PC-3 (cell line): ENCODE measurements at regions of chr1 and their contacts with region 1.

Region 1: DNA sequence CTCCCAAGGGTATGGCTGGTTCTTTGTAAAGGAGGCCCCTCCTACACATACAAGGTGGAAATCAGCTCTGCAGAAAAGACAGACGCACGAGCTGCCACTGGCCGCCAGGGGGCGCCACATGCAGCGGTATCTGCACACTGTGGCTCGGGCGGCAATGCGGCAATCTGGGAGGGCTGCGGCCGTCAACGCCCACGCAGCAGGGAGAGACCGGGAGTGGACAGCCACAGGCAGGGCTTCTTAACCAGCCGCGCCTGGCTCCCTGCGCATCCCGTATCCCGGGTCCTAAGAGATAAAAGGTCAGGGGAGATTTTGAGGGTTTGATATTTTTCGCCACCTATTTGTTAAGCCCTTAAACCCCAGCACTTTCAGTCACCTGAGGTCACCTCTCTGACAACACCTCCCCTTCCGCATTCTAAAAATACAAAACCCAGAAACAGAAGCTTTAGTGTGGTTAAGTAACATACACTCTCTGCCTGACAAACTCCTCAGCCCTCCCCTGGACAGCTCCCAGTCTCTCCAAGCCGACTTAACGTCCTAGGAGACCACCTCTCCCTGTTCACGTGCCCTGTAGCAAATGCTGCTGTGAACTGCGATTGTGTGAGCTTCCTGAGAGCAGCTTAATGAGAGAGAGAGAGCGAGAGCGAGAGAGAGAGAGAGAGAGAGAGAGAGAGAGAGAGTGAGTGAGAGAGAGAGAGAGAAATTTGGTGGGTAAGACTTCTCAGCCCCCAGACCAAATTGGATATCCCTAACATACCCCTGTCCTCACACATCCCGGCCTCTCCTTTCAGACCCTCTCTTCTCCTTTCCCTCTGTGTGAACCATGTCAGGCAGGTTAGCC is 13.5 kb upstream of the KCNA2 start:
- DNase-seq: peak; percentile 79
- ATAC-seq: peak; percentile 78
- H3K4me3 ChIP-seq: no peak overlapping the region
- H3K27ac ChIP-seq: no peak overlapping the region
- H3K4me1 ChIP-seq: peaks cover 6% of the 10 kb centered on the region; the same call in 1 of the 2 replicates
- H3K27me3 ChIP-seq: peaks cover 45% of the 10 kb centered on the region
- CTCF ChIP-seq: peak; percentile 97

Region 2: DNA sequence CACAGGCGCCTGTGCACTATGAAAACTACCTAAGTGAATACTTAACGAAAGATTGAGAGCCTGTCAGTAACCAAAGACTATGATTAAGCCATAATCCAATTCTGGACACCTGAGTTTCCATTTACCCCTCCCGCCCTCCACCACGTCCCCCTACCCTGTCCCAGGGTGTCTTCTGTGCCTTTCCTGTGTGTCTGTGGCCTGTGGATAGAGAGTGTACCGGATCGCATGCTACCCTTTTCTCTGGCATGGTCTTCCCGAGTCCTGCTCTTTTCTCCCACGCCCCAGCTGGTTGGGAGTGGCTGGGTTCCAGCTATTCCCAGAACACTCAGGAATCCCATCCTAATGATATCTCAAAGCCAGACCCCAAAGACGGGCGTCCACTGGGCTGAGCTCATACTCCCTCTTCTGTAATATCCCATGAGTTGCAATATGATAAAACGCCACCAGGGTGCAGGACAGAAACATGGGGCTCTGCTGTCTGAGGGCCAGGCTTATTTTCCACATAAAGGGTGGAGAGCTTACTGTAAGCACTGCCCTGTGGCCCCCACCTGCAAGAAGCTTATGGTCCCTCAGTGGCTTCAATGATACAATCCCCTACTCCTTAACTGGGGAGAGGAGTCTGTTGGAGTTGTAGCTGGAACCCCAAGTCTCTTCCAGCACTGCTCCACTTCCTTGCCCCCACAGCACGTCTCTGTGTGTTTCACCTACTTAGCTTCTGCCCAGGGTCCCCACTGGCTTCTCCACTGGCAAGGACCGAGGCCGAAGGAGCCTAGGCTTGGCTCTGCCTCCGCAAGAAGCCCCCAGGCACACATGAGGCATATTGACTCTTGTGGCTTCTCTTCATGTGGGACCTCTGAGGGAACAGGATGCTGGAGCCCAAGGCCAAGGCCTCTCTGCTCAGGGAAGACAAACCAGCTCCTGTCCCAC is 531.6 kb before region 1 on chr1:
- CTCF ChIA-PET with region 1: no interaction called
- POLR2A ChIA-PET with region 1: no interaction called
- intact Hi-C with region 1: loop called (anchors 5 kb)
- DNase-seq: peak; percentile 76
- ATAC-seq: peak; percentile 96
- H3K4me3 ChIP-seq: no peak overlapping the region
- H3K27ac ChIP-seq: no peak overlapping the region
- H3K4me1 ChIP-seq: no peaks in the 10 kb centered on the region
- H3K27me3 ChIP-seq: 0 out of 2 replicates have a peak, but pooled peaks cover 5% of the 10 kb centered on the region
- CTCF ChIP-seq: peak; percentile 72

Region 3: DNA sequence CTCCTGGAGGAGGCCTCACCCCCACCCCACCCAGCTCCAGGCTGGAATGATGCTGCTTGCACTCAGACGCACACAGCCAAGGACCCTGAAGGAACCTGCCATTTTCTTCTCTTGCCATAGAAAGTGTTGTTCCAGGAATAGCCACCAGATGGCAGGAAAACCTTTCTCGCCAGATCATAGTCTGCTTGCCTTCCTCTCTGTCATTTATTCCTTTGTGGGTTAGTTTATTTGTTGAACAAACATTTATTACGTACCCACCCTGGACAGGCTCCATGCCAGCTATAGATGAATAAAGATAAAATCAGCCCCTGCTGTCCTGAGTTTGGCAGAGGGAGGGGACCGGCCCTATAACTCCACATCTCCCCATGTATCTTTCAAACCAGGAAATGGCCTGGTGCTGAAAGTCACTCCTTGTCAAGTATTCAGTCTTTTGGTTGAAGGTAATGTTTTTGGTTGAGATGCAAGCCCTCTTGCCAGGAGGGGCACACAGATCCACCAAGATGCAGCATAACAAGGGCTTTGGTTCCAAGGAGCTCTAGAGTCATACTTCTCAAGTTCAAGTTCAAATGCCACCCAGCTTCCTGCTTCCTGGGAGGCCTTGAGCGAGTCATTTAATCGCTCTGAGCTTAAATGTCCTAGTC is 416.5 kb before region 1 on chr1:
- CTCF ChIA-PET with region 1: no interaction called
- POLR2A ChIA-PET with region 1: no interaction called
- intact Hi-C with region 1: loop called (anchors 5 kb)
- DNase-seq: peak; percentile 94
- ATAC-seq: peak; percentile 72
- H3K4me3 ChIP-seq: no peak overlapping the region
- H3K27ac ChIP-seq: peak overlapping the region; percentile 51
- H3K4me1 ChIP-seq: peaks cover 10% of the 10 kb centered on the region
- H3K27me3 ChIP-seq: no peaks in the 10 kb centered on the region
- CTCF ChIP-seq: peak; percentile 92

Region 4: DNA sequence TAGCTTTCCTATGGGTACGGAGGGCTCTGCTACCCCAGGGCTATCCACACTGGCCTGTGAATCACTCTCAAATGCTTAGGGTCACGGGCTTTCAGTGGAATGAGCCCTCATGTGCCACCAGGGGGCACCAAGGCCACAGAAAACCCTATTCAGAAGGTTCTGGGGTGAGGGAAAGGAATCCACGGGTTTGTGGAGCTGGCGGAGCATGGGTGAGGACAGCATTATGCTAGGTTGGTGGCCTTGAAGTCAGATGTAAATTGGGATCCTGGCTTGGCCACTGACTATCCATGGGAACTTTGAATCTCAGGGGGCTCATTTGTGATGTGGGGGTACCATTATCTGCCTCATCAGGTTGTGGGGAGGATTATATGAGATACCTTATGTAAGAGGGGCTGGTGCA is 207.1 kb before region 1 on chr1:
- CTCF ChIA-PET with region 1: no interaction called
- POLR2A ChIA-PET with region 1: no interaction called
- intact Hi-C with region 1: loop called (anchors 10 kb)
- DNase-seq: peak; percentile 78
- ATAC-seq: peak; percentile 83
- H3K4me3 ChIP-seq: no peak overlapping the region
- H3K27ac ChIP-seq: no peak overlapping the region
- H3K4me1 ChIP-seq: peaks cover 8% of the 10 kb centered on the region; the same call in 1 of the 2 replicates
- H3K27me3 ChIP-seq: no peaks in the 10 kb centered on the region
- CTCF ChIP-seq: peak; percentile 90

Region 5: GRCh38 chr1:110548381-110548780 is 71.2 kb before region 1 on chr1:
- CTCF ChIA-PET with region 1: no interaction called
- POLR2A ChIA-PET with region 1: no interaction called
- intact Hi-C with region 1: loop called (anchors 5 kb)
- DNase-seq: peak; percentile 62
- ATAC-seq: peak; percentile 92
- H3K4me3 ChIP-seq: no peak overlapping the region
- H3K27ac ChIP-seq: no peak overlapping the region
- H3K4me1 ChIP-seq: no peaks in the 10 kb centered on the region
- H3K27me3 ChIP-seq: peaks cover 43% of the 10 kb centered on the region
- CTCF ChIP-seq: peak; percentile 63

Region 6: DNA sequence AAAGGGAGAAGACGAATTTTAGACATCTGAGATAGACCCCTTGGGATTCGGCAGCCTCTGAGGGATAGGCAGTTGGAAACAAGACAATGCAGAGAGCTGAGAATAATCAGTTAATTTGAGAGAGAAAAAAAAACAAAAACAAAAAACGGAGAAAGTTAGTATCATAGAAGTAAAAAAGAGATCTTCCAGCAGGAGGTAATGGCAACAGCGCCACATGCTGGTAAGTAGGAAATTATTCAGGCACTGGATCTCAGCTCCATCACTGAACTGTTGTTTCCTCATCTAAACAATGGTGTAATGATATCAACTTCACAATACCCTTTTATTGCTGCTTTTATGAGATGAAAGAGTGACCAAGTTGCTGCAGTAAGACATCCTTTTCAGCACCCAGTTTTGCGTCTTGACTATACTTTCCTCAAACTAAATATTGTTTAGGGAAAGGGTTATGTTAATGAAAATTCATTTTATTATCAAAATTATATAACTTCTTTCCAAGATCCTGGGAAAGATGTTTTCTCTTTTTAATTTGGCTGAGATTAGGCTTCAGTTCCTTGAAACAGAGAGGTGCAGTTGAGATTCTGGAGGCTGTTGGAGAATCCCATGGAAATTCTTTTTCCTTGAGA is 146.5 kb after region 1 on chr1:
- CTCF ChIA-PET with region 1: interaction called, 10 read pairs
- POLR2A ChIA-PET with region 1: no interaction called
- intact Hi-C with region 1: no loop called
- DNase-seq: peak; percentile 56
- ATAC-seq: peak; percentile 45; the same call in 1 of the 2 replicates
- H3K4me3 ChIP-seq: no peak overlapping the region
- H3K27ac ChIP-seq: no peak overlapping the region
- H3K4me1 ChIP-seq: peaks cover 9% of the 10 kb centered on the region; the same call in 1 of the 2 replicates
- H3K27me3 ChIP-seq: peaks cover 23% of the 10 kb centered on the region
- CTCF ChIP-seq: peak; percentile 87